AG04449 (cell line): ENCODE measurements at regions of chr20 and their contacts with region 1.

Region 1: DNA sequence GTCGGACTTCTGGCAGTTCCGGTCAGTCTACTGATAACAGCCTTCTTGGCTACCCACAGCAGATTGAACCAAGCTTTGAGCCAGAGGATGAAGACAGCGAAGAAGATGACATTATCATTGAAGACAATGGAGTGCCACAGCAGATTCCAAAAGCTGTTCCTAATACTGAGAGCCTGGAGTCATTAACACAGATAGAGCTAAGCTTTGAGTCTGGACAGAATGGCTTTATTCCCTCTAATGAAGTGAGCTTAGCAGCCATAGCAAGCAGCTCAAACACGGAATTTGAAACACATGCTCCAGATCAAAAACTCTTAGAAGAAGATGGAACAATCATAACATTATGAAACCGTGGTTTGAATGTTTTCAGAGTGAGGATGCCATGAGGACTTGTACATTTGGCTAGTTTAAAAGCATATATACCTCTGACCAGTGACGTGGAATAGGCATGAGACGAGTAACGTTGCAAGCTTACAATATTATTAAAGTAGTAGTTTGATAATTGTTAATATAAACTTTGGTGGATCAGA is 18.8 kb downstream of the PARD6B start:
- DNase-seq: no peak
- H3K4me3 ChIP-seq: no peak overlapping the region
- CTCF ChIP-seq: no peak

Region 2: GRCh38 chr20:50595988-50596689 is 154.1 kb before region 1 on chr20:
- CTCF ChIA-PET with region 1: interaction called, 10 read pairs
- POLR2A ChIA-PET with region 1: no interaction called
- DNase-seq: no peak
- H3K4me3 ChIP-seq: no peak overlapping the region
- CTCF ChIP-seq: no peak

Region 3: GRCh38 chr20:50686821-50687494 is 63.2 kb before region 1 on chr20:
- CTCF ChIA-PET with region 1: no interaction called
- POLR2A ChIA-PET with region 1: no interaction called
- DNase-seq: no peak
- H3K4me3 ChIP-seq: no peak overlapping the region
- CTCF ChIP-seq: no peak

Region 4: GRCh38 chr20:50724851-50725721 is 25.1 kb before region 1 on chr20:
- CTCF ChIA-PET with region 1: interaction called, 25 read pairs
- POLR2A ChIA-PET with region 1: no interaction called
- DNase-seq: peak; percentile 80
- H3K4me3 ChIP-seq: no peak overlapping the region; the same call in 1 of the 2 replicates
- CTCF ChIP-seq: no peak

Region 5: DNA sequence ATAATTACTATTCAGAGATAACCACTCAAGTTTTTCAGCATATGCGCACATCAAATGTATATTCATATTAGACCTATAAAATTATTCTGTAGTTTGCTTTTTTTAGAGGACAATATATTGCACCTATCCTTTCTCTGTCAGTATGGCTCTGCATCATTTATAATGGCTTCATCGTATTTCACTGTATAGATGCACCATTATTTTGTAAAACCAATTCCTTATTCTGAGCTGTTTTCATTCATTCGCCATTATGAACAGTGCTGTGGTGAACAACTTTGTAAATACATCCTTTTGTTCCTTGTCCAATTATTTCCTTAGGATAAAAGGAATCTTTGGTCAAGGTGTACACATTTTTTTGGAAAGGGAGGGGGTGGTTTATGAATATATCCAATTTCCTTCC is 15.5 kb after region 1 on chr20:
- CTCF ChIA-PET with region 1: interaction called, 15 read pairs
- POLR2A ChIA-PET with region 1: no interaction called
- DNase-seq: no peak
- H3K4me3 ChIP-seq: no peak overlapping the region
- CTCF ChIP-seq: no peak

Region 6: GRCh38 chr20:50879649-50880550 is 129.7 kb after region 1 on chr20:
- CTCF ChIA-PET with region 1: no interaction called
- POLR2A ChIA-PET with region 1: no interaction called
- DNase-seq: no peak
- H3K4me3 ChIP-seq: no peak overlapping the region
- CTCF ChIP-seq: no peak